PC-9 (cell line): ENCODE measurements at regions of chr12 and their contacts with region 1.

Region 1: DNA sequence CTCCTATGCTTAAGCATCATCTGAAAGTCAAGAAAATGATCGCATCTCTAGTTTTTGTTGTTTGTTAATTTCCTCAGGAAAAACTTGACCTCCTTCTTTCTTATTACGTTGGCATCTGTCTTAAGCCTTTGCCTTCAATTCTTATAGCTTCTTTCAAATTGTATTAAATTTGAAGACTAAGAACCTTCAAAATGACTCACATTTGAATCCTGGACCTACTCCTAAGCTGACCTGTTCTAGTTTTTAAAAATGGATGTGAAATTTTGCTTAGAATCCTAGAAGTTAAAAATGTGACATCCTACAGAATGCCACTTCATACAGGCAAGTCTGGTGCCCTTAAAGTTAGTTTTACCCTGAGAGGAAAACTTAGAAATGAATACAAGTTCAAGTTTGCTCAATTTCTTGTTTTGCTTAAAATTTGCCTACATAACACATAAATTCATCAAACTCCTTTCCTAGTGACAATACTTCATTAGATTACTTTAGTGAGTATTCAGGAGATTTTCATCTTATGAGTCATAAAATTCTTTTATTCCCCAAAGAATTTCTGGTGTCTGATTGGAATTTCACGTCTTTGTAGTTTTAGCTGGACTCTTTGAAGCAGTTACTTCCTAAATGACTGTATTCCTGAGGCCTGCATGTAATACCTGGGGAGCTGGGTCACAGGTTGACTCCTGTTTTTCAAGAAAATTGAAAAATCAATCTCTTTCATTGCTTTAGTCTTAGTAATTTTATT is 152.3 kb downstream of the MSRB3 start:
- DNase-seq: peak; percentile 7 to 78
- H3K4me3 ChIP-seq: no peak overlapping the region
- H3K27ac ChIP-seq: peak overlapping the region; percentile 41
- H3K4me1 ChIP-seq: peaks cover 14% of the 10 kb centered on the region
- H3K27me3 ChIP-seq: no peaks in the 10 kb centered on the region
- CTCF ChIP-seq: no peak

Region 2: GRCh38 chr12:65460063-65460462 is 29.3 kb after region 1 on chr12:
- CTCF ChIA-PET with region 1: no interaction called
- POLR2A ChIA-PET with region 1: no interaction called
- intact Hi-C with region 1: loop called (anchors 1 kb)
- DNase-seq: no peak
- H3K4me3 ChIP-seq: no peak overlapping the region
- H3K27ac ChIP-seq: no peak overlapping the region
- H3K4me1 ChIP-seq: no peaks in the 10 kb centered on the region
- H3K27me3 ChIP-seq: no peaks in the 10 kb centered on the region
- CTCF ChIP-seq: no peak